ENCODE measurements at regions of chr18 and their contacts with region 1.

Region 1: GRCh38 chr18:830315-830901 is 18.4 kb upstream of the YES1 start:
- DNase-seq: peak; percentile 48
- H3K4me3 Mint-ChIP-seq: peak overlapping the region; percentile 45
- H3K27ac Mint-ChIP-seq: peak overlapping the region; percentile 75
- H3K4me1 Mint-ChIP-seq: peaks cover 24% of the 10 kb centered on the region
- H3K27me3 Mint-ChIP-seq: peaks cover 6% of the 10 kb centered on the region

Region 2: GRCh38 chr18:650428-650858 is 180.0 kb before region 1 on chr18:
- CTCF ChIA-PET with region 1: no interaction called
- POLR2A ChIA-PET with region 1: no interaction called
- DNase-seq: peak; percentile 74
- H3K4me3 Mint-ChIP-seq: peak overlapping the region; percentile 46
- H3K27ac Mint-ChIP-seq: peak overlapping the region; percentile 82
- H3K4me1 Mint-ChIP-seq: peaks cover 32% of the 10 kb centered on the region
- H3K27me3 Mint-ChIP-seq: no peaks in the 10 kb centered on the region

Region 3: DNA sequence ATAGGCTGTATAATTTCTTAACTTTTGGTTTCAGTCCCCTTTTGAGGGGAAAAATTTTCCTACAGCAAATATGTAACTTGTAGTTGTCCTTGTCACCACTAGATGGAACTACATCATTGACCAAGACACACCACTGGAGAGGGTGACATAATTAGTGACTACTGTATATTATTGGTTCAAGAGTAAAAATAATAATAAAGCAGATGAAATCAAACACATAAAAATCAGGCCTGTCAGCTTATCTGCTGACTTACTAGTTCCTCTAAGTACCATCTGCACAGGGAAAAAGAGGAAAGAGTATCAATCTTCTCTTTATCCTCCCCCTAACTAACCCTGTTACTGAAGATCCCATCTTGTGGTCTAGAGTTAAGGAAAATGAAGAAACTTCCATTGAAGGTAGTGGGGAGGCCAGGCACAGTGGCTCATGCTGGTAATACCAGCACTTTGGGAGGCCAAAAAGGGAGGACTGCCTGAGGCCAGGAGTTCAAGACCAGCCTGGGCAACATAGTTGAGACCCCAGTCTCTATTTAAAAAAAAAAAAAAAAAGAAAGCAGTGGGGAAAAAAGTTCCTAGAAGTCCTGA is 88.4 kb before region 1 on chr18:
- CTCF ChIA-PET with region 1: interaction called, 11 read pairs
- POLR2A ChIA-PET with region 1: no interaction called
- DNase-seq: no peak
- H3K4me3 Mint-ChIP-seq: no peak overlapping the region
- H3K27ac Mint-ChIP-seq: no peak overlapping the region
- H3K4me1 Mint-ChIP-seq: peaks cover 3% of the 10 kb centered on the region
- H3K27me3 Mint-ChIP-seq: no peaks in the 10 kb centered on the region

Region 4: DNA sequence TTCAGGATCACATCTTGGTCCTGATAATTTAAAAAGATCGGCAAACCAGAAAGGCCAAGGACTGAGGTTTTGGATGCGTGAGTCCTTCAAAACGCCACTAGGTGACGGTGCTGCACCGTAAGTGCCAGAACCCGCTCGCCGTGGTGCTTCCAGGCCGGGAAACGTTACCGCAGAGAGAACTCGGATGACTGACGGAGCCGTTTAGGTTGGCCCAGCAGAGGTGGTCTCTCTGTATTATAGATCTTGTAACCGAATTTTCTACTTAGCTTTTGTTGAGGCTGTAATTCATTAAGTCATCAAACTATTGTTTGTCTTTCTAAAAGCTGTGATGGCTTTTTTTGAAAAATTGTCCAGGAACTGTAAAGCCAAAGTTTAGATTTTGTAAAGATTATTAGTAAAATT is 34.5 kb after region 1 on chr18:
- CTCF ChIA-PET with region 1: no interaction called
- POLR2A ChIA-PET with region 1: no interaction called
- DNase-seq: peak; percentile 69
- H3K4me3 Mint-ChIP-seq: no peak overlapping the region
- H3K27ac Mint-ChIP-seq: no peak overlapping the region
- H3K4me1 Mint-ChIP-seq: peaks cover 6% of the 10 kb centered on the region
- H3K27me3 Mint-ChIP-seq: peaks cover 20% of the 10 kb centered on the region

Measured in activated CD4-positive, alpha-beta T cell treated with anti-CD3 and anti-CD28 coated beads, Interleukin-2, amount 10 ng/mL, durations not matched to agents 7 days and 5 days (primary cell).